PC-3 (cell line): ENCODE measurements at regions of chr7 and their contacts with region 1.

Region 1: DNA sequence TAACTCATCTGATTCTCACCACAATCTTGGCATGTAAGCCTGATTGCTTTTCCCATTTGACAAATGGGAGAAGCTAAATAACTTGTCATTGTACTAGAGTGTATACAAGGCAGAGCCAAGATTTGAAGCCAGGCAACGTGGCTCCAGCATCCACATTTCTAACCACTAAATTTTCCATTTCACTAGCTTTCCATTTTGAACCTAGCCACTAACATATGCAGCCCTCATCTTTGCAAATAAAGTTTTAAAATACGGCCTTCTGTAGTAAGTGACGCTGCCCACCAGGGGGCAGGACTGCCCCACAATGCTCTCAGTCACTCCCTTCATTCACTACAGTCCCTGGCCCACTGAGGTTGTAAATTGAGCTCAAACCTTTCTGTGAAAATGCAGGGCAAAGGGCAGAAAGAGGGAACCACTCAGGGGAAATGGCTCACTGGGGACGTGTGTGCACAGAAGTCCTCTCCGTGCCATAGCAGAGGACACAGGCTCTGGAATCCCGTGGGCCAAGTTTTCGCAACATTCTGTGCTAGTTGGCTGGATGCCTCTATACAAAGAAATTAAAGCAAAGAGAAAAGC is 315.7 kb downstream of the TNS3 start:
- DNase-seq: peak; percentile 80
- ATAC-seq: peak; percentile 85
- H3K4me3 ChIP-seq: no peak overlapping the region
- H3K27ac ChIP-seq: no peak overlapping the region
- H3K4me1 ChIP-seq: peaks cover 9% of the 10 kb centered on the region
- H3K27me3 ChIP-seq: no peaks in the 10 kb centered on the region
- CTCF ChIP-seq: peak; percentile 94

Region 2: GRCh38 chr7:47291461-47292081 is 25.4 kb after region 1 on chr7:
- CTCF ChIA-PET with region 1: interaction called, 10 read pairs
- POLR2A ChIA-PET with region 1: no interaction called
- intact Hi-C with region 1: no loop called
- DNase-seq: peak; percentile 92
- ATAC-seq: peak; percentile 95
- H3K4me3 ChIP-seq: peak overlapping the region; percentile 5; the same call in 1 of the 2 replicates
- H3K27ac ChIP-seq: peak overlapping the region; percentile 92
- H3K4me1 ChIP-seq: peaks cover 39% of the 10 kb centered on the region
- H3K27me3 ChIP-seq: no peaks in the 10 kb centered on the region
- CTCF ChIP-seq: no peak

Region 3: GRCh38 chr7:47379629-47380324 is 113.6 kb after region 1 on chr7:
- CTCF ChIA-PET with region 1: interaction called, 10 read pairs
- POLR2A ChIA-PET with region 1: no interaction called
- intact Hi-C with region 1: loop called (anchors 2 kb)
- DNase-seq: peak; percentile 83
- ATAC-seq: peak; percentile 90
- H3K4me3 ChIP-seq: peak overlapping the region; percentile 28; the same call in 1 of the 2 replicates
- H3K27ac ChIP-seq: peak overlapping the region; percentile 64
- H3K4me1 ChIP-seq: peaks cover 33% of the 10 kb centered on the region
- H3K27me3 ChIP-seq: no peaks in the 10 kb centered on the region
- CTCF ChIP-seq: no peak

Region 4: DNA sequence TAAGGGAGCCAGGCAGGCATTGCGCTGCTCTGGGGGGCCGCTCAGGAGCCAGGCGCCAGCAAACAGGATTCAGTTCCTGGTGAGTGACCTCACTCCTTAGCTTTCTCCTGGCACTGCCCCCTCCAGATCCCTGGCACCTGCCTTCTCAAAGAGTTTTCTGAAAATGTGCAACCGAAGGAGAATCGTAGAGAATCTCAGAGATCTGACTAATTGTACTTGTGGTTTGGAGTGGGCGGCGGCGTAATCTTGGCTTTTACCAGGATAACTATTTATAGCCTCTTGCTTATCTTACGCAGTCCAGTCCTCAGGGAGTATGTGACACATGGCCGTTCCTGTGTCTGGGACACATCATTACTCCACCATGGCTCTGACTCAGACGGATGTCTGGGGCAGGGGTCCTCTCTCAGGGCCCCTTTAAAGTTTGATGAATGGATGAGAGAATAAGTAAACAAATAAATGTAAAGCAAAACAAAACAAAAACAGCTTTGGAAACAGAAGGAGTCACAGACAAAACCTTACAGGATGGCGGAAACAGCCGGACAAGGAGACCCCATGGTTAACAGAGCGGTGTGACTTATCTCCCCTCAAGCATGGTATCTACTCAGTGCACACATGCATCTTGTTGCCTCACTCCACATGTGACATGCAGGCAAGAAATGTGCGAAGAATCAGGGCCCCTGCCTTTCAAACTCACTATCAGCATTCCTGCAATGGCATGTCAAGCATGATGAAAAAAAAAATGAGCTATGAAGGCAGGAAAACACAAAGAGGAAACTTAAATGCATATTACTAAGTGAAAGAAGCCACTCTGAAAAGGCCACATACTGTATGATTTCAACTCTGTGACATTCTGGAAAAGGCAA is 216.0 kb after region 1 on chr7:
- CTCF ChIA-PET with region 1: interaction called, 8 read pairs
- POLR2A ChIA-PET with region 1: no interaction called
- intact Hi-C with region 1: loop called (anchors 5 kb)
- DNase-seq: peak; percentile 83
- ATAC-seq: peak; percentile 88
- H3K4me3 ChIP-seq: peak overlapping the region; percentile 6; the same call in 1 of the 2 replicates
- H3K27ac ChIP-seq: peak overlapping the region; percentile 80
- H3K4me1 ChIP-seq: peaks cover 38% of the 10 kb centered on the region
- H3K27me3 ChIP-seq: no peaks in the 10 kb centered on the region
- CTCF ChIP-seq: no peak

Region 5: DNA sequence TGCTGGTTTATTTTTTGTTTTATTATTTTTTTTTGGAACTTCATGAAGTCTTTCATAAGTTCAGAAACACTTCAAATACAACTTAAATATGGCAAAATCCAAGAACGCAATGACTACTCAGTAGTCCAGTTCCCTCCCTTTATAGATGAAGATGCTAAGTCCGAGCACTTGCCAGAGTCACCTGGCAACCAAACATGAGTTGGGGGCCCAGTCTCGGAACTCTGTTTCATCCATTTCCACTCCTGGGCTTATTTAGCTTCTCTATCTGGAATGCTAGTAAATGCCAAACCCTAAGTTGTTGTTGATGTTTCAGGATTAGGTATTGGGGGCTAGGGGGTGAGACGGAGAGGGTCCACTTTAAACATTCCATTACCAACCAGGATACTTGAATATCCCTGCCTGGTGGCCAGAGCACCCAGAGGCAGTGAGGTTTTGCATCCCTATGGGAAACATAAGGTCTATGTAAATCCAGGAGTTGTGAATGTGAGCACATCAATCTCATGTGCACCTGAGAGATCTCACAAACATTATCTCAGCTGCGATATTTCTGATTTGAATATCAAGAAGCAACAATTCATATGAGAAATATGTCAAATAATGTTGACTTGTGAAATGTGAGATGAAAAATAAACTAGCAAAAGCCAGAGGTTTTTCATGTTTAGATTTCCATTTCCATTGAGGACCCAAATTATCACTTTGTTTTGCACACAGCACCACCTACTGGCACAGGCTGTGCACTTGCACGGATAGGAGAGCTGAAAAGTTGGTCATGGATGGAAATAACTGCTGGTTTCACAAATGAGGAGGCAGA is 552.8 kb after region 1 on chr7:
- CTCF ChIA-PET with region 1: interaction called, 5 read pairs
- POLR2A ChIA-PET with region 1: no interaction called
- intact Hi-C with region 1: loop called (anchors 1 kb)
- DNase-seq: peak; percentile 88
- ATAC-seq: peak; percentile 78
- H3K4me3 ChIP-seq: no peak overlapping the region
- H3K27ac ChIP-seq: no peak overlapping the region
- H3K4me1 ChIP-seq: peaks cover 18% of the 10 kb centered on the region
- H3K27me3 ChIP-seq: no peaks in the 10 kb centered on the region
- CTCF ChIP-seq: peak; percentile 97

Region 6: GRCh38 chr7:47945261-47946001 is 679.2 kb after region 1 on chr7:
- CTCF ChIA-PET with region 1: interaction called, 6 read pairs
- POLR2A ChIA-PET with region 1: no interaction called
- intact Hi-C with region 1: loop called (anchors 10 kb)
- DNase-seq: peak; percentile 77
- ATAC-seq: peak; percentile 52
- H3K4me3 ChIP-seq: no peak overlapping the region
- H3K27ac ChIP-seq: no peak overlapping the region
- H3K4me1 ChIP-seq: peaks cover 19% of the 10 kb centered on the region
- H3K27me3 ChIP-seq: no peaks in the 10 kb centered on the region
- CTCF ChIP-seq: peak; percentile 91